ENCODE measurements at regions of chr3 and their contacts with region 1.

Region 1: DNA sequence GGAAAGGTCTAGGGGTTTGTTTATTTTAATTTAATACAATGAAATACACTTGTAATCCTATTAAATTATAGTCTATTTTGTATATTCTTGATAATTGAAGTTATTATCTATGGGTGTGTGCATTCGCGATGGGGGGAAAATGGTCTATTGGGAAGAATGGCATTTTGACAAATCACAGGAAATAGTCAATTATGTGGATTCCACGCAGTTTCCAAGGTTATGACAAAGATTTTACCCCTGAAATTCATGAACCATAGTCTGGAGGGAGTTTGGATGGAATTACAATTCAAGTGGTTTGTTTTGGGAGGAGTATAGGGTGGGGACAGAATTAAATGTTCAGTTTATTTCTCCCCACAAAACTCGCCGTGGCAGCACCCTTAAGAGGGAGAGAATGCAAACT is 66.5 kb downstream of the RBMS3 start:
- DNase-seq: no peak
- ATAC-seq: no peak
- H3K4me3 ChIP-seq: no peak overlapping the region
- H3K27ac ChIP-seq: no peak overlapping the region
- H3K4me1 ChIP-seq: no peaks in the 10 kb centered on the region
- H3K27me3 ChIP-seq: no peaks in the 10 kb centered on the region
- CTCF ChIP-seq: no peak
- EP300 ChIP-seq: no peak
- POLR2A ChIP-seq: no peak
- RAD21 ChIP-seq: no peak

Region 2: GRCh38 chr3:29026286-29026685 is 321.1 kb before region 1 on chr3:
- CTCF ChIA-PET with region 1: no interaction called
- POLR2A ChIA-PET with region 1: no interaction called
- RAD21 ChIA-PET with region 1: no interaction called
- SMC1A ChIA-PET with region 1: no interaction called
- in situ Hi-C with region 1: no loop called
- intact Hi-C with region 1: no loop called
- DNase-seq: peak; percentile 19
- ATAC-seq: peak; percentile 97
- H3K4me3 ChIP-seq: no peak overlapping the region
- H3K27ac ChIP-seq: no peak overlapping the region
- H3K4me1 ChIP-seq: no peaks in the 10 kb centered on the region
- H3K27me3 ChIP-seq: no peaks in the 10 kb centered on the region
- CTCF ChIP-seq: no peak
- EP300 ChIP-seq: no peak
- POLR2A ChIP-seq: no peak
- RAD21 ChIP-seq: no peak

Region 3: DNA sequence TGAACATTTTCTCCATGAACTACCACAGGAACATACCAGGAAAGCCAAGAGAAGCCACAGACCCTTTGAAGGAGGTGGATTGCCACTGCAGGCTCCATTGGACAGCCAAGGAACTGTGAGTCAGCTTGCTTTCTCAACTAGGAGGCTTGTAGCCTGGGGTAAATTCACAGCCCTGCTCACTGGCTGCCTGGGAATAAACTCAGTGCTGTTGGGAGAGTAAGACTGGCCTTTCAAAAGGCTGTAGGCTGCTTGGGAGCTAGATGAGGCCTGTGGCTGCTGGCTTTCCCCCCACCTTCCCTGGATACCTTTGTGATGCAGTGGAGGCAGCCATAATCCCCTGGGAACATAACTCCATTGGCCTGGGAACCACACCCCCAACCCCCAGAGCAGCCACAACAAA is 290.1 kb before region 1 on chr3:
- CTCF ChIA-PET with region 1: no interaction called
- POLR2A ChIA-PET with region 1: no interaction called
- RAD21 ChIA-PET with region 1: no interaction called
- SMC1A ChIA-PET with region 1: no interaction called
- in situ Hi-C with region 1: no loop called
- intact Hi-C with region 1: no loop called
- DNase-seq: no peak
- ATAC-seq: no peak
- H3K4me3 ChIP-seq: no peak overlapping the region
- H3K27ac ChIP-seq: no peak overlapping the region
- H3K4me1 ChIP-seq: no peaks in the 10 kb centered on the region
- H3K27me3 ChIP-seq: no peaks in the 10 kb centered on the region
- CTCF ChIP-seq: no peak
- EP300 ChIP-seq: no peak
- POLR2A ChIP-seq: no peak
- RAD21 ChIP-seq: no peak

Region 4: DNA sequence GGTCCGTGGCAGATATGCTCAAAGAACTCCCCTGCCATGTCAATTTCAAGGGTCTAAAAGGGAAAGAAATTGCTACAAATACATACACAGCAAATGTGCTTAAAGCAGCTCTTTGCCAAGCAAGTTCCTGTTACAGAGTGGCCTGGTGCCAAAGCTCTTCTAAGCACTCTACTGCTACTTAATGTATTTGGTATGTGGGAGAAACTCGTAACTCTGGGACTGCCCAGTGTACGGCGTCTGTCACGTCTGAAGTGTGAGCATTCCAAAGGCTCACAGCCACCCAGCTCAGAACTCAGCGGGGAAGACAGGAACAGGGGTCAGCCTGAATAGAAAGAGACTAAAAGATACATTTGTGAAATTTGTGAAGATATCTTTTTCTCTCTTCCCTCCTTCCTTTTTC is 12.0 kb before region 1 on chr3:
- CTCF ChIA-PET with region 1: interaction called, 7 read pairs
- POLR2A ChIA-PET with region 1: interaction called, 10 read pairs
- RAD21 ChIA-PET with region 1: interaction called, 14 read pairs
- SMC1A ChIA-PET with region 1: interaction called, 25 read pairs
- in situ Hi-C with region 1: no loop called
- intact Hi-C with region 1: no loop called
- DNase-seq: no peak
- ATAC-seq: peak; percentile 47
- H3K4me3 ChIP-seq: no peak overlapping the region
- H3K27ac ChIP-seq: no peak overlapping the region
- H3K4me1 ChIP-seq: no peaks in the 10 kb centered on the region
- H3K27me3 ChIP-seq: no peaks in the 10 kb centered on the region
- CTCF ChIP-seq: no peak
- EP300 ChIP-seq: no peak
- POLR2A ChIP-seq: no peak
- RAD21 ChIP-seq: no peak